ENCODE measurements at regions of chr9 and their contacts with region 1.

Region 1: GRCh38 chr9:75185585-75186170 is 97.4 kb downstream of the OSTF1 start:
- DNase-seq: peak; percentile 57
- H3K4me3 Mint-ChIP-seq: no peak overlapping the region
- H3K27ac Mint-ChIP-seq: no peak overlapping the region
- H3K4me1 Mint-ChIP-seq: no peaks in the 10 kb centered on the region
- H3K27me3 Mint-ChIP-seq: no peaks in the 10 kb centered on the region
- CTCF ChIP-seq: peak; percentile 27

Region 2: GRCh38 chr9:75088260-75088905 is 97.3 kb before region 1 on chr9 and contains the start of gene OSTF1:
- CTCF ChIA-PET with region 1: no interaction called
- intact Hi-C with region 1: loop called (anchors 10 kb)
- DNase-seq: peak; percentile 93
- H3K4me3 Mint-ChIP-seq: peak within 1 kb of the TSS; percentile 98
- H3K27ac Mint-ChIP-seq: peak within 1 kb of the TSS; percentile 76
- H3K4me1 Mint-ChIP-seq: peaks cover 8% of the 10 kb centered on the region
- H3K27me3 Mint-ChIP-seq: no peaks in the 10 kb centered on the region
- CTCF ChIP-seq: no peak
- total RNA-seq, gene OSTF1: 27.0 and 29.7 TPM in 2 replicates